Calu3 (cell line): ENCODE measurements at regions of chr6 and their contacts with region 1.

Region 1: GRCh38 chr6:41846666-41847237 is 48.4 kb downstream of the USP49 start:
- DNase-seq: peak; percentile 88
- H3K4me3 Mint-ChIP-seq: no peak overlapping the region
- H3K27ac Mint-ChIP-seq: no peak overlapping the region
- H3K4me1 Mint-ChIP-seq: peaks cover 14% of the 10 kb centered on the region
- H3K27me3 Mint-ChIP-seq: no peaks in the 10 kb centered on the region
- CTCF ChIP-seq: peak; percentile 80

Region 2: GRCh38 chr6:41824571-41825569 is 21.9 kb before region 1 on chr6:
- CTCF ChIA-PET with region 1: no interaction called
- intact Hi-C with region 1: loop called (anchors 2 kb)
- DNase-seq: peak; percentile 23
- H3K4me3 Mint-ChIP-seq: no peak overlapping the region
- H3K27ac Mint-ChIP-seq: peak overlapping the region; percentile 23
- H3K4me1 Mint-ChIP-seq: peaks cover 12% of the 10 kb centered on the region
- H3K27me3 Mint-ChIP-seq: no peaks in the 10 kb centered on the region
- CTCF ChIP-seq: no peak

Region 3: GRCh38 chr6:41936073-41936837 is 89.5 kb after region 1 on chr6:
- CTCF ChIA-PET with region 1: interaction called, 4 read pairs
- intact Hi-C with region 1: loop called (anchors 1 kb)
- DNase-seq: peak; percentile 80
- H3K4me3 Mint-ChIP-seq: no peak overlapping the region
- H3K27ac Mint-ChIP-seq: no peak overlapping the region
- H3K4me1 Mint-ChIP-seq: peaks cover 30% of the 10 kb centered on the region
- H3K27me3 Mint-ChIP-seq: no peaks in the 10 kb centered on the region
- CTCF ChIP-seq: peak; percentile 86